CD4-positive, alpha-beta memory T cell (primary cell): ENCODE measurements at regions of chr4 and their contacts with region 1.

Region 1: GRCh38 chr4:153221783-153222706 is 17.8 kb downstream of the TRIM2 start:
- DNase-seq: peak; percentile 19 to 49 (median 41)
- H3K4me3 ChIP-seq: peak overlapping the region; percentile 24 to 62
- H3K4me3 Mint-ChIP-seq: peak overlapping the region; percentile 87 to 94 (median 92)
- H3K27ac ChIP-seq: peak overlapping the region; percentile 56
- H3K27ac Mint-ChIP-seq: peak overlapping the region; percentile 73 to 91 (median 88)
- H3K4me1 ChIP-seq: peaks cover 36% of the 10 kb centered on the region
- H3K4me1 Mint-ChIP-seq: peaks cover 30 to 51% (median 38%) of the 10 kb centered on the region in 4 donors
- H3K27me3 ChIP-seq: peaks cover 3% of the 10 kb centered on the region
- H3K27me3 Mint-ChIP-seq: no peaks in the 10 kb centered on the region

Region 2: GRCh38 chr4:153181293-153181692 is 40.8 kb before region 1 on chr4:
- CTCF ChIA-PET with region 1: no interaction called
- POLR2A ChIA-PET with region 1: no interaction called
- intact Hi-C with region 1: no loop called
- DNase-seq: no peak
- H3K4me3 ChIP-seq: no peak overlapping the region
- H3K4me3 Mint-ChIP-seq: no peak overlapping the region
- H3K27ac ChIP-seq: no peak overlapping the region
- H3K27ac Mint-ChIP-seq: no peak overlapping the region
- H3K4me1 ChIP-seq: no peaks in the 10 kb centered on the region
- H3K4me1 Mint-ChIP-seq: peaks cover 0 to 17% (median under 1%) of the 10 kb centered on the region in 4 donors
- H3K27me3 ChIP-seq: no peaks in the 10 kb centered on the region
- H3K27me3 Mint-ChIP-seq: no peaks in the 10 kb centered on the region

Region 3: DNA sequence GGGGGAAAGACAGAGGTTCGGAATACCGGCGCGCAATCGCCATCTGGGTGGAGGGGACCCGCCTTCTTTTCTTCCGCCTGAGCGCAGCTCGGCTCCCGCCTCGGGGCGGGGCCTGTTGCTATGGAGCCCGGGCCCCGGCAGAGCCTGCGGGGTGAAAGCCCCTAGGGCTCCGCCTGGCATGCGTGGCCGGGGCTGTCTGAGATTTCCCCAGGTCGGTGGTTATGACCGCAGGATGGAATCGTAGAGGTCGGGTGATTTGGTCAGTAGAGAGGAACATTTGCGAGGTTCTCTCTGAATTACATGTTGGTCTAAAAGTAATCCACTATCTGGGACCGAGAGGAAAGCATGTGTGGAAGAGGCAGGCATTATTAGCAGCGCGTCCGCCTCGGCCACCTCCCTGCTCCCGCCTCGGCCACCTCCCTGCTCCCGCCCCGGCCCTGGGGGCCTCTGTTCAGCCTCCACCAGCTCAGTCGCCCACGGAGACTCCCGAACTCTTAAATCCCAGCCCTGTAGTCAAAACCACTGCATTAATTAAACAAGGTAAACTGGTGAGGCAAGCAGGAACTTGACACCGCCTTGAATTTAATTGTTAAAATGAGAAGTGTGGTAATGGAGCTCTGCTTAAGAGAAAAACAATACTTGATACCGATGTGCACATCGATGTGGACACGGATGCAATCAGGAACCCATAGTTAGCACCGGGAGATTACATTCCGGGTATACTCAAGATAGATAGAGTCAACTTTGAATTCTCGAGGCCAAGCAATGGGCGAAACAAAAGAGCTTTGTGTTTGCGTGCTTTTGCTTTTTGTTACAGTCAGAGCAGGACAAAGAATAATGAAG is 27.4 kb after region 1 on chr4:
- CTCF ChIA-PET with region 1: interaction called, 4 read pairs
- POLR2A ChIA-PET with region 1: interaction called, 10 read pairs
- intact Hi-C with region 1: loop called (anchors 2 kb)
- DNase-seq: peak; percentile 86 to 90 (median 87)
- H3K4me3 ChIP-seq: peak overlapping the region; percentile 63 to 64
- H3K4me3 Mint-ChIP-seq: peak overlapping the region; percentile 89 to 95 (median 94)
- H3K27ac ChIP-seq: peak overlapping the region; percentile 73
- H3K27ac Mint-ChIP-seq: peak overlapping the region; percentile 89 to 97 (median 97)
- H3K4me1 ChIP-seq: peaks cover 17% of the 10 kb centered on the region
- H3K4me1 Mint-ChIP-seq: peaks cover 17 to 43% (median 31%) of the 10 kb centered on the region in 4 donors
- H3K27me3 ChIP-seq: no peaks in the 10 kb centered on the region
- H3K27me3 Mint-ChIP-seq: peaks cover 0 to 2% of the 10 kb centered on the region in 2 donors

Region 4: GRCh38 chr4:154320521-154320920 is 1098.5 kb after region 1 on chr4:
- CTCF ChIA-PET with region 1: no interaction called
- POLR2A ChIA-PET with region 1: no interaction called
- intact Hi-C with region 1: no loop called
- DNase-seq: no peak
- H3K4me3 ChIP-seq: no peak overlapping the region
- H3K4me3 Mint-ChIP-seq: no peak overlapping the region
- H3K27ac ChIP-seq: no peak overlapping the region
- H3K27ac Mint-ChIP-seq: no peak overlapping the region
- H3K4me1 ChIP-seq: no peaks in the 10 kb centered on the region
- H3K4me1 Mint-ChIP-seq: no peaks in the 10 kb centered on the region
- H3K27me3 ChIP-seq: no peaks in the 10 kb centered on the region
- H3K27me3 Mint-ChIP-seq: peaks cover 0 to 6% of the 10 kb centered on the region in 2 donors